ENCODE measurements at regions of chr19 and their contacts with region 1.

Region 1: GRCh38 chr19:45643024-45643926 is 4.1 kb upstream of the EML2 start:
- DNase-seq: peak; percentile 77 to 93 (median 88)
- ATAC-seq: peak; percentile 35
- H3K4me3 ChIP-seq: peak overlapping the region; percentile 66
- H3K4me3 Mint-ChIP-seq: peak overlapping the region; percentile 74
- H3K27ac ChIP-seq: peak overlapping the region; percentile 91 to 92
- H3K27ac Mint-ChIP-seq: peak overlapping the region; percentile 72
- H3K4me1 ChIP-seq: peaks cover 72% of the 10 kb centered on the region
- H3K4me1 Mint-ChIP-seq: peaks cover 58% of the 10 kb centered on the region
- H3K27me3 ChIP-seq: no peaks in the 10 kb centered on the region
- H3K27me3 Mint-ChIP-seq: no peaks in the 10 kb centered on the region
- CTCF ChIP-seq: peak; percentile 96

Region 2: DNA sequence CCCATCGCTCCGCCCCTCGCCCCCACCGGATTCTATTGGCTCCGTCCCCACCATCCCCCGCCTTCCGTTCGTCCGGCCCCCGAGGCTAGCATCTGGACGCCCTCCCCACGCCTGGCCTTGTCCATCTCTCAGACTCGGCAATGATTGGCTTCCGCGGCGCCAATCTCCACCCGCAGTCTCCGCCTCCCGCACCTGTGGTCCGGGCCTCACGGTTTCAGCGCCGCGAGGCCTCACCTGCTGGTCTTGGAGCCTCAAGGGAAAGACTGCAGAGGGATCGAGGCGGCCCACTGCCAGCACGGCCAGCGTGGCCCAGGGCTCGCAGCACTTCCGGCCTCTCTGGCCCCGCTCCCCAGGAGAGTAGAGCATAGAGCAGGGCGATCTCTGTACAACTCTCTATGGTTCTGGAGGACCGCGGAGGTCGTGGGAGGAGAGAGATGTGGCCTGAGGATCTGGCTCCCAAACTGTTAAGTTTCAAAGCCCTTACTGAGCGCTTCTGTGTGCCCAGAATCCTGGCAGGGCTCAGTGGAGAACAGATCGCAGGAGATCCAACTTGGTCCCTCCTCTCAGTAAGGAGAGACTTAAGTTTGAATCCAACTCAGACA is 219.6 kb before region 1 on chr19 and contains the start of gene ERCC1:
- CTCF ChIA-PET with region 1: no interaction called
- POLR2A ChIA-PET with region 1: no interaction called
- intact Hi-C with region 1: loop called in 1 of 2 experiments (anchors 5 kb)
- DNase-seq: peak in 7 of 14 experiments; percentile 36 to 87 (median 48)
- ATAC-seq: peak; percentile 58
- H3K4me3 ChIP-seq: peak within 1 kb of the TSS; percentile 90
- H3K4me3 Mint-ChIP-seq: peak within 1 kb of the TSS; percentile 92
- H3K27ac ChIP-seq: peak within 1 kb of the TSS; percentile 54 to 75
- H3K27ac Mint-ChIP-seq: peak within 1 kb of the TSS; percentile 80
- H3K4me1 ChIP-seq: peaks cover 53% of the 10 kb centered on the region
- H3K4me1 Mint-ChIP-seq: peaks cover 48% of the 10 kb centered on the region
- H3K27me3 ChIP-seq: peaks cover 4 to 5% of the 10 kb centered on the region in 2 experiments
- H3K27me3 Mint-ChIP-seq: peaks cover 9% of the 10 kb centered on the region
- CTCF ChIP-seq: no peak
- total RNA-seq, gene ERCC1: 32.5 to 32.6 TPM

Region 3: GRCh38 chr19:45496349-45496953 is 146.8 kb before region 1 on chr19:
- CTCF ChIA-PET with region 1: interaction called, 5 read pairs
- POLR2A ChIA-PET with region 1: interaction called, 12 read pairs
- intact Hi-C with region 1: loop called in 1 of 2 experiments (anchors 1 kb)
- DNase-seq: peak in 9 of 14 experiments; percentile 28 to 74 (median 50)
- ATAC-seq: peak; percentile 28
- H3K4me3 ChIP-seq: peak overlapping the region; percentile 65
- H3K4me3 Mint-ChIP-seq: peak overlapping the region; percentile 81
- H3K27ac ChIP-seq: no peak overlapping the region
- H3K27ac Mint-ChIP-seq: no peak overlapping the region
- H3K4me1 ChIP-seq: peaks cover 66% of the 10 kb centered on the region
- H3K4me1 Mint-ChIP-seq: peaks cover 43% of the 10 kb centered on the region
- H3K27me3 ChIP-seq: peaks cover 23 to 25% of the 10 kb centered on the region in 2 experiments
- H3K27me3 Mint-ChIP-seq: peaks cover 33% of the 10 kb centered on the region
- CTCF ChIP-seq: no peak

Region 4: DNA sequence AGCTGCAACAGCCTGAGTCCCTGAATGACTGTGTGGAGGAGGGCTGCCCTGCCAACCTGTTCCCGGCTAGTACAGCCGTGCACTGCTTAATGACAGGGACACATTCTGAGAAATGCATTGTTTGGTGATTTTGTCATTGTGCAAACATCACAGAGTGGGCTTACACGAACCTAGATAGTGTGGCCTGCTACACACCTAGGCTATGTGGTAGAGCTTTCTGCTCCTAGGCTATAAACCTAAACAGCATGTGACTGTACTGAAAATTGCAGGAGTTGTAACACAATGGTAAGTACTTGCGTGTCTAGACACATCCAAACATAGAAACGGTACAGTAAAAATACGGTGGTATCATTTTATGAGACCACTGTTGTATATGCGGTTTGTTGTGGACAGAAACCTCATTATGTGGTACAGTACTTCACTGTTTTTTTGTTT is 101.0 kb before region 1 on chr19:
- CTCF ChIA-PET with region 1: no interaction called
- POLR2A ChIA-PET with region 1: no interaction called
- intact Hi-C with region 1: no loop called
- DNase-seq: no peak
- ATAC-seq: no peak
- H3K4me3 ChIP-seq: no peak overlapping the region
- H3K4me3 Mint-ChIP-seq: no peak overlapping the region
- H3K27ac ChIP-seq: no peak overlapping the region
- H3K27ac Mint-ChIP-seq: no peak overlapping the region
- H3K4me1 ChIP-seq: peaks cover 2% of the 10 kb centered on the region
- H3K4me1 Mint-ChIP-seq: no peaks in the 10 kb centered on the region
- H3K27me3 ChIP-seq: no peaks in the 10 kb centered on the region
- H3K27me3 Mint-ChIP-seq: no peaks in the 10 kb centered on the region
- CTCF ChIP-seq: no peak

Region 5: GRCh38 chr19:45584332-45585157 is 58.7 kb before region 1 on chr19 and contains the start of gene OPA3:
- CTCF ChIA-PET with region 1: interaction called, 7 read pairs
- POLR2A ChIA-PET with region 1: interaction called, 7 read pairs
- intact Hi-C with region 1: loop called (anchors 1 kb)
- DNase-seq: peak; percentile 97 to 100 (median 99)
- ATAC-seq: peak; percentile 85
- H3K4me3 ChIP-seq: peak within 1 kb of the TSS; percentile 95
- H3K4me3 Mint-ChIP-seq: peak within 1 kb of the TSS; percentile 88
- H3K27ac ChIP-seq: peak within 1 kb of the TSS; percentile 98 to 99
- H3K27ac Mint-ChIP-seq: peak within 1 kb of the TSS; percentile 98
- H3K4me1 ChIP-seq: peaks cover 21% of the 10 kb centered on the region
- H3K4me1 Mint-ChIP-seq: peaks cover 26% of the 10 kb centered on the region
- H3K27me3 ChIP-seq: peaks cover 0 to under 1% of the 10 kb centered on the region in 2 experiments
- H3K27me3 Mint-ChIP-seq: peaks cover 12% of the 10 kb centered on the region
- CTCF ChIP-seq: no peak
- total RNA-seq, gene OPA3: 3.1 to 3.2 TPM

Region 6: GRCh38 chr19:45630493-45630919 is 12.8 kb before region 1 on chr19:
- CTCF ChIA-PET with region 1: interaction called, 17 read pairs
- POLR2A ChIA-PET with region 1: no interaction called
- intact Hi-C with region 1: no loop called
- DNase-seq: no peak
- ATAC-seq: no peak
- H3K4me3 ChIP-seq: no peak overlapping the region
- H3K4me3 Mint-ChIP-seq: no peak overlapping the region
- H3K27ac ChIP-seq: no peak overlapping the region
- H3K27ac Mint-ChIP-seq: no peak overlapping the region
- H3K4me1 ChIP-seq: no peaks in the 10 kb centered on the region
- H3K4me1 Mint-ChIP-seq: no peaks in the 10 kb centered on the region
- H3K27me3 ChIP-seq: no peaks in the 10 kb centered on the region
- H3K27me3 Mint-ChIP-seq: no peaks in the 10 kb centered on the region
- CTCF ChIP-seq: no peak

Region 7: DNA sequence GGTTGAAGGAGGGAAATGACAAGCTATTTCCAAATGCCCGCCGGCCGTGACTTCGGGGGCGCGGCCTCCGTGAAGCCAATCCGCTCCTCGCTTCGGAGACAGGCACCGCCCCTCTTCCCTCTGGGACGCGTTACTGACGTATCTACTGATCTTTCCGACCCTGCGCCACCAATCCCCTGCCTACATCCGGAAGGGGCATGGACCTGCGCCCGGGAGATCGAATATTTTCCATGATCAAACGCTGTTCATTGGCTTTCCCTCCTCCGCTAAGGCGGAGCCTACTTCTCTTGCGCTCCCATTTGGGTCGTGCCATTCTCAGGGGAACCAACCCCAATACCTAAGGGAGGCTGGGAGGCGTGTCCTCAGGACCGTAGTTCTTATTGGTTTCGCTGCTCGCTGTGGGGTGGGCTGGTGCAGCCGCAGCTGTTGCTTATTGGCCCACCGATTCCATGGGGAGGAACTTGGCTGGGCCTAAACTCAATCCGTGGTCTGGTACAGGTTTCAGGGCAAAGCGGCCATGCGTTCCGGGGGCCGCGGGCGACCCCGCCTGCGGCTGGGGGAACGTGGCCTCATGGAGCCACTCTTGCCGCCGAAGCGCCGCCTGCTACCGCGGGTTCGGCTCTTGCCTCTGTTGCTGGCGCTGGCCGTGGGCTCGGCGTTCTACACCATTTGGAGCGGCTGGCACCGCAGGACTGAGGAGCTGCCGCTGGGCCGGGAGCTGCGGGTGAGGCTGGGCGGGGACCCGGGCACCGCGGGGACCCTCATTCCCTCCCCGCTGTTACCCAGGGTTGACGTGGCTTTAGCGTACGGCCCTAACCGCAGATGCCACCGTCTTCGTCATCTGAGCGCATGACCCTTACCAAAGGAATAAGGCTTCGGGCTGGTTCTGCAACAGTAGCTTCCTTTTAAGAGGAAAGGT is 49.2 kb after region 1 on chr19 and contains the start of gene QPCTL:
- CTCF ChIA-PET with region 1: interaction called, 18 read pairs
- POLR2A ChIA-PET with region 1: interaction called, 10 read pairs
- intact Hi-C with region 1: loop called in 1 of 2 experiments (anchors 5 kb)
- DNase-seq: peak; percentile 92 to 99 (median 94)
- ATAC-seq: peak; percentile 87
- H3K4me3 ChIP-seq: peak within 1 kb of the TSS; percentile 85
- H3K4me3 Mint-ChIP-seq: peak within 1 kb of the TSS; percentile 96
- H3K27ac ChIP-seq: peak within 1 kb of the TSS; percentile 86 to 93
- H3K27ac Mint-ChIP-seq: peak within 1 kb of the TSS; percentile 95
- H3K4me1 ChIP-seq: peaks cover 39% of the 10 kb centered on the region
- H3K4me1 Mint-ChIP-seq: peaks cover 33% of the 10 kb centered on the region
- H3K27me3 ChIP-seq: no peaks in the 10 kb centered on the region
- H3K27me3 Mint-ChIP-seq: no peaks in the 10 kb centered on the region
- CTCF ChIP-seq: no peak
- total RNA-seq, gene QPCTL: 3.7 to 5.0 TPM

Measured in CD4-positive, alpha-beta T cell (primary cell).